Activated CD4-positive, alpha-beta memory T cell treated with anti-CD3 and anti-CD28 coated beads for 36 hours (primary cell): ENCODE measurements at regions of chr11 and their contacts with region 1.

Region 1: DNA sequence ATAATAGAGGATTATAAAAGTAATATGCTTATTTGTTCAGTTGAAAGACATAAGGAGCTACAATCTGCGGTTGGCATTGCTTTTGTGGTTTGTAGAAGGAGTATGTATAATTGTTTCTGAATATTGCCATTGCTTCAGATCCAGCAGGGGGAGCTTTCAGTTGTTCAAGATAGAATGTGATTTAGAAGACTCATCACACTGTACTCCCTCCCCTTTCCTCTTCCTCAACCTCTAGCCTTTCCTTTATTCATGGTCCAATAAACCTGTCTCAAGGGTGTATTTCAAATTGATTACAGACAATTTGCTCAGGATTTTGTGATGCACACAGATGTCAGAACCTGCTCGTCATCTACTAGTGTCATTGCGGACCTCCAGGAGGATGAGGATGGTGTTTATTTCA is 9.8 kb downstream of the PRMT3 start:
- DNase-seq: no peak
- H3K4me3 Mint-ChIP-seq: no peak overlapping the region
- H3K27ac Mint-ChIP-seq: no peak overlapping the region
- H3K4me1 Mint-ChIP-seq: peaks cover 19% of the 10 kb centered on the region
- H3K27me3 Mint-ChIP-seq: no peaks in the 10 kb centered on the region

Region 2: GRCh38 chr11:20374746-20375300 is 22.5 kb before region 1 on chr11:
- CTCF ChIA-PET with region 1: no interaction called
- POLR2A ChIA-PET with region 1: no interaction called
- intact Hi-C with region 1: no loop called
- DNase-seq: no peak
- H3K4me3 Mint-ChIP-seq: no peak overlapping the region
- H3K27ac Mint-ChIP-seq: peak overlapping the region; percentile 79
- H3K4me1 Mint-ChIP-seq: peaks cover 20% of the 10 kb centered on the region
- H3K27me3 Mint-ChIP-seq: no peaks in the 10 kb centered on the region

Region 3: DNA sequence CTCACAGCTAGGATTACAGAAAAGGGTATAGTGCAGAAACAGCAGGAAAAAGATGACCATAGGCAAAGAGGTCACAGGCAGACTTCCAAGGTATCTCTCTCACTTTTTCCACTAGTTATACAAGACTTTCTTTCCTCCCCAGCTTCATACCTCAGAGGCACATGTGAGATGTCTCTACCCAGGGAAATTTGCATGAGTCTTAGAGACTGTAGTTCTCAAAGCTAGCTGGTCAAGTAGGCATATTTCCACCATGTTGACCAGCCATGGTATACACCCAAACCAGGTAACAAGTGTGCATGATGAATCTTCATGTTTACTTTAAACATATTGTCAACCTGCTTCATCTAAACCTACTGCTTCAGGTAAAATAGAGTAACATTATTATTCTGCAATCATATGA is 18.2 kb after region 1 on chr11:
- CTCF ChIA-PET with region 1: interaction called, 14 read pairs
- POLR2A ChIA-PET with region 1: interaction called, 4 read pairs
- intact Hi-C with region 1: no loop called
- DNase-seq: no peak
- H3K4me3 Mint-ChIP-seq: no peak overlapping the region
- H3K27ac Mint-ChIP-seq: no peak overlapping the region
- H3K4me1 Mint-ChIP-seq: peaks cover 18% of the 10 kb centered on the region
- H3K27me3 Mint-ChIP-seq: no peaks in the 10 kb centered on the region

Region 4: GRCh38 chr11:20443596-20443995 is 46.3 kb after region 1 on chr11:
- CTCF ChIA-PET with region 1: interaction called, 13 read pairs
- POLR2A ChIA-PET with region 1: no interaction called
- intact Hi-C with region 1: loop called (anchors 2 kb)
- DNase-seq: no peak
- H3K4me3 Mint-ChIP-seq: no peak overlapping the region
- H3K27ac Mint-ChIP-seq: no peak overlapping the region
- H3K4me1 Mint-ChIP-seq: no peaks in the 10 kb centered on the region
- H3K27me3 Mint-ChIP-seq: no peaks in the 10 kb centered on the region

Region 5: DNA sequence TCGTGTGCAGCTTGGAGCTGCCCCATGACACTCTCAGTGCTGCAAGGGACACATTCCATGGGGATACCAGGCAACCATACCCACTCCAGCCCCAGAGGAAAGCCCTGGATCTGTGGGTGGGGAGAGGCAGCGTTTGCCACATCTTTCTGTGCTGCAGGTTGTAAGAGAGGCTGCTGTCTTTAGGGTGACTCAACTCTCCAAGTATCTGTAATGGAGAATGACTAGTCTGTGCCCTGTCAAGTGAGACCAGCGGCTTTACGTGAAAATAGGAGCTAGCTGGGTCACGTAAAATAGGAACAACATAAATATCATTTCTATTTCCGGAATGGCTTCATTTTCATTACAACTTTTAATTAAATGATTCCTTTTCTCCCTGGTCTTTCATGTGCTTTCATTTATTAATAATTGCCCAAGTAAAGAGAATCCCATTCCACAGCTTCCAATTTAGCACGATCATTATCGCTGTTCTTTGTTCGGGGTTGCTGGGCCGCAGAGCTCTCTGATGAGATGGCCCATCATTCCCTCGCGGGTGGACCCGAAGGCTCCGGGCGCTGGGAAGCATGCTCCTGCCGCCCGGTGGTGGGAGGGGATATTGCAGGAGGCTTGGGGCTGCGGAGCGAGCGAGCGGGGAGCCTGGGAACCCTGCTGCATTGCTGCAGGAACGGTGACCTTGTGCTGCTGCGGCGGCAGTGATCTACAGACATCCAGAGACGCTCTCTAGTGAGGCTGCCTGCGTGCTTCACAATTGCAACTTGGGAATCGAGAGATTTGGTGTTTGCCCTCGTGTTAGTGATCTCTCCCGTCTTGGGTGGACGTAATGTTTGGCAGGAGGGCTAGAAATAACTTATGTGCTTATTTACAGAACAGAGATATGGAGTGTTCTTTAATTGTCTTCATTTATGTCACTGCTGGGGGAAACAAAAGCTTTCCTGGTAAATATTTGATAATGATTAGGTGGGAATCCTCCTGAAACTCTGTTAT is 212.7 kb after region 1 on chr11:
- CTCF ChIA-PET with region 1: interaction called, 15 read pairs
- POLR2A ChIA-PET with region 1: no interaction called
- intact Hi-C with region 1: loop called (anchors 1 kb)
- DNase-seq: peak; percentile 76
- H3K4me3 Mint-ChIP-seq: peak overlapping the region; percentile 40
- H3K27ac Mint-ChIP-seq: no peak overlapping the region
- H3K4me1 Mint-ChIP-seq: peaks cover 7% of the 10 kb centered on the region
- H3K27me3 Mint-ChIP-seq: peaks cover 67% of the 10 kb centered on the region